ENCODE measurements at regions of chrX and their contacts with region 1.

Region 1: DNA sequence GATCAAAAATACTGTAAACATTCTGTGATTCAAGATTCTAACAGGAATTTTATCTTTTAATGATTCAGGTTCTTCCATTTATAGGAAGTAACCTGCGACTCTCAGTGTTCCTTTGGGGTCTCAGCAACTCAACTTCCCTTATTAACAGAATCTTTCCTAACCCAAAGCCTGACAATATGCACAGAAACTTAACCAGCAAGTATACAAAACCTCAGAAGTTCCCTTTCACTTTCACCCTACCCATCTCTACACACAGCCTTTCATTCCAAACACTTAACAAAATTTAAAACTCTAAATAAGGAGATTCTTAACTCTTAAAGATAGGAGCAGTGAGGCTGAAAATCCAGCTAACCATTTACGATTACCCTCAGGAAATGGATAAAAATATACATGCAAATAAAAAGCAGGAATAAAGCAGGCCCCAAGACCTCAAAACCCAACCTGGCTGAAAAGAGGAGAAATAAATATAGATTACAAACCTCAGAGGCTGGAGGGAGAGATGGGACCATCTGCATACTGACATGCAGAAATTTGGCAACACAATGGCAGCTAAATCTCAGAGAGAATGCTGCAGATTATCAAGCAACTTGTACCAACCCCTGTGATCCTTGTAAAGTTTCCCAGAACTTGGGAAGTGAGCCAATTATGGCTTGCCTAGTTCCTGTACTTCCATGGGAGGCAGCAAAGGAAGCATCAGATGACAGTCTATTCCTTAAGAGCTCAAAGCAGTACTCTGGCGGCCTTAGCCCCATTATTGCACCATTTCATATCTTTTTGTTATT is 101.0 kb downstream of the ATP11C start:
- DNase-seq: no peak
- H3K4me3 ChIP-seq: no peak overlapping the region
- H3K27ac ChIP-seq: peak overlapping the region in 3 of 4 donors; percentile 42 to 66 (median 49)
- H3K4me1 ChIP-seq: peaks cover 0 to 68% (median 26%) of the 10 kb centered on the region in 4 donors
- H3K27me3 ChIP-seq: no peaks in the 10 kb centered on the region
- CTCF ChIP-seq: no peak
- EP300 ChIP-seq: no peak
- POLR2A ChIP-seq: no peak

Region 2: GRCh38 chrX:139932901-139933796 is 101.3 kb after region 1 on chrX and contains the start of gene ATP11C:
- intact Hi-C with region 1: loop called (anchors 5 kb)
- DNase-seq: peak; percentile 94
- H3K4me3 ChIP-seq: peak within 1 kb of the TSS; percentile 67 to 86 (median 74)
- H3K27ac ChIP-seq: peak within 1 kb of the TSS; percentile 95 to 99 (median 98)
- H3K4me1 ChIP-seq: peaks cover 0 to 11% (median 3%) of the 10 kb centered on the region in 4 donors
- H3K27me3 ChIP-seq: no peaks in the 10 kb centered on the region
- CTCF ChIP-seq: no peak
- EP300 ChIP-seq: no peak
- POLR2A ChIP-seq: peak; percentile 52
- total RNA-seq, gene ATP11C: 17.2 to 32.0 (median 23.9) TPM

Measured in sigmoid colon (tissue), 7 donors.